ENCODE measurements at regions of chr11 and their contacts with region 1.

Region 1: DNA sequence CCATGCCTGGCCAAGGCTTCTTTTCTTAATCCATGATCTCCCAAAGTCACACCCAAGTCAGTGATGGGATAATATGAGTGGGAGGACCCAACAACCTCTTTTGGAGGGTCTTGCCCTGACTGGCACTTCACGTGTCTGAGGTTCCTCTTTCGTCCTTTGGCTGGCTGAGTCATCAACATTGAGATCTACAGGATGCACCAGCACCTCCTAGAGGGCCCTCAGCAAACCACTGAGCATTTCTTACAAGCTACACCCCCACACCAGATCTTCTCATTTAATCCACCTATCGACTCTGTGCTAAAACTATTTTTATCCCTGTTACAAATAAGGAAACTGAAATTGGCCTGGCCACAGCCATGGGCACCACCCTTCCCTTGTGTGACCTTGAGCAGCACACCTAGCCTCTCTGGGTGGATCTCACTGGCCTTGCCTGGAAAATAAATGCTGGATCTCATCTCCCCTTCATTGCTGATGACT is 63.4 kb downstream of the FLI1 start:
- DNase-seq: peak; percentile 87
- ATAC-seq: peak; percentile 90
- H3K4me3 Mint-ChIP-seq: peak overlapping the region; percentile 27
- H3K27ac Mint-ChIP-seq: peak overlapping the region; percentile 92
- H3K4me1 Mint-ChIP-seq: peaks cover 63% of the 10 kb centered on the region
- H3K27me3 Mint-ChIP-seq: no peaks in the 10 kb centered on the region

Region 2: DNA sequence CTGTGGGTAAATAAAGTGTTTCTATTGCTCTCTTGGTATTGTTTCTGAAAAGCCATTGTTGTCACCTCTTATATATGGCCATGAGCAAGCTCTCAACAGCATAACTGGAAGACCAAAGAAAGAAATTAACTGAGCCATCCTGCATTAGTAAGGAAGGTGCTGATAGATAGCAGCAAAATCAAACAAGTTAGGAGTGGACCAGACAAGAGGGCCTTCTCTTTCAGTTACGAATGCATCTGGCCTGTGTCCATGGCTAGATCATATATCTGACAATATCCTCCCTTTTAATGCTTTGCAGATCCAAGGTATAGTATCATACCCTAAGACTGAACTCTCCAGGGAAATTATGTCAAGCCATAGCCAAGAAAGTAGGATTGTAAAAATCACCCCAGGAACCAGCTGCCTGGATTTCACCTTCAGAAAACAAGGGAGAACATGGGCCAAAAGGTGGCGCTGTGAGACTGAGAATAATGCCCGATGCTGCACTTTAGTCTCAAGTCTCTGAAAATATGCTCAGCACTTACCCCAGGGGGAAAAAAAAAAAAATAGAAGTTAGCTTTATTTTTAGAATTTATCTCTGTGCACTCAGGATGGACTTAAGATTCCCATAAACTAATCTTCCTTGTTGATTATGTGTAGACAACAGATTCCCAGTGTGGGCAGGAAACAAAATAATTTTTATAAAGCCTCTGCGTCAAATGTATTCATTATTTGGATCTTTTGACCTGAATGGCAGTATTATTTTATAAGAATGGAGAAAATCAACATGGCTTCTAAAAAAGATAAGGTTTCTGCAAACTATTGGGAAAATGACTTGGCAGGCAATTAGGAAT is 585.0 kb before region 1 on chr11:
- CTCF ChIA-PET with region 1: interaction called, 10 read pairs
- DNase-seq: peak; percentile 91
- ATAC-seq: peak; percentile 93
- H3K4me3 Mint-ChIP-seq: no peak overlapping the region
- H3K27ac Mint-ChIP-seq: no peak overlapping the region
- H3K4me1 Mint-ChIP-seq: peaks cover 9% of the 10 kb centered on the region
- H3K27me3 Mint-ChIP-seq: no peaks in the 10 kb centered on the region

Region 3: DNA sequence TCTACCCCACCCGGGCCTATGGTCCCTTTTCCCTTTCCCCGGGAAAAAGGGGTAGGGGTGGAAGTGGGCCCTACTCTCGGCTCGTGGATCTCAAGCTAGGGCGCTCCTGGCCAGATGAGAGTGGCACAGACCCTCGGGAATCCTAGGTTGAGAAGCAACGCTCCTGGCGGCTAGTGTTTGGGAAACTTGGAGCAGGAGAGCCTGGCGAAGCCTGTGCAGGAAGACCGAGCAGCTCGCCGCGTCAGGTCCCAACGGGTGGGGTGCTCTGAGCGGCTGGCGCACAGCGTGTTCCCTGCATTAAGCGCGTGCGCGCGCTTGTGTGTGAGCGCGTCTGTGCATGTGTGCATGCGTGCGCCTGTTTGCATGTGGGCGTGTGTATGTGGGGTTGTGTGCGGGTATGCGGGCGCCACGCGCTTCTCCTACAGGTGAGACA is 70.5 kb before region 1 on chr11:
- CTCF ChIA-PET with region 1: interaction called, 14 read pairs
- DNase-seq: peak; percentile 72
- ATAC-seq: peak; percentile 86
- H3K4me3 Mint-ChIP-seq: peak overlapping the region; percentile 69
- H3K27ac Mint-ChIP-seq: no peak overlapping the region
- H3K4me1 Mint-ChIP-seq: peaks cover 28% of the 10 kb centered on the region
- H3K27me3 Mint-ChIP-seq: peaks cover 69% of the 10 kb centered on the region

Region 4: DNA sequence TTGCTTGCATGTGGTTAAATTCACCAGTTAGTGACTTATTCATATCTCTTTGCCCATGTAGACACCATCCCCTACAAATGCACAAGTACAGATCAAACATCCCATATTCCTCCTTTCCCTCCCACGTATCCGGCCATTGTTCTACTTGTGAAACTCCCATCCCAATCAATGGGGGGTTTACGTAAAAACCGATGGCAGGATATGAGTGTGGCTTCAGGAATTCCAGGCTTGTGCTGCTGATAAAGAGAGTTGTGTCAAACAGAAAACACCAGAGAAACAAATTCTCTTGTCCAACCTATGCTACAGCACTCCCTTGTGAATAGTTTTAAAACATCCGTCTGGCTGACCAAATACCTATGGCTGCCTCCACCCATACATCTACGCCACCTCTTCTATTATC is 47.9 kb before region 1 on chr11:
- CTCF ChIA-PET with region 1: interaction called, 11 read pairs
- DNase-seq: no peak
- ATAC-seq: no peak
- H3K4me3 Mint-ChIP-seq: no peak overlapping the region
- H3K27ac Mint-ChIP-seq: no peak overlapping the region
- H3K4me1 Mint-ChIP-seq: peaks cover 86% of the 10 kb centered on the region
- H3K27me3 Mint-ChIP-seq: no peaks in the 10 kb centered on the region

Region 5: GRCh38 chr11:128714881-128715280 is 42.4 kb before region 1 on chr11:
- CTCF ChIA-PET with region 1: interaction called, 11 read pairs
- DNase-seq: peak; percentile 40
- ATAC-seq: no peak
- H3K4me3 Mint-ChIP-seq: no peak overlapping the region
- H3K27ac Mint-ChIP-seq: peak overlapping the region; percentile 35
- H3K4me1 Mint-ChIP-seq: peaks cover 92% of the 10 kb centered on the region
- H3K27me3 Mint-ChIP-seq: no peaks in the 10 kb centered on the region

Region 6: DNA sequence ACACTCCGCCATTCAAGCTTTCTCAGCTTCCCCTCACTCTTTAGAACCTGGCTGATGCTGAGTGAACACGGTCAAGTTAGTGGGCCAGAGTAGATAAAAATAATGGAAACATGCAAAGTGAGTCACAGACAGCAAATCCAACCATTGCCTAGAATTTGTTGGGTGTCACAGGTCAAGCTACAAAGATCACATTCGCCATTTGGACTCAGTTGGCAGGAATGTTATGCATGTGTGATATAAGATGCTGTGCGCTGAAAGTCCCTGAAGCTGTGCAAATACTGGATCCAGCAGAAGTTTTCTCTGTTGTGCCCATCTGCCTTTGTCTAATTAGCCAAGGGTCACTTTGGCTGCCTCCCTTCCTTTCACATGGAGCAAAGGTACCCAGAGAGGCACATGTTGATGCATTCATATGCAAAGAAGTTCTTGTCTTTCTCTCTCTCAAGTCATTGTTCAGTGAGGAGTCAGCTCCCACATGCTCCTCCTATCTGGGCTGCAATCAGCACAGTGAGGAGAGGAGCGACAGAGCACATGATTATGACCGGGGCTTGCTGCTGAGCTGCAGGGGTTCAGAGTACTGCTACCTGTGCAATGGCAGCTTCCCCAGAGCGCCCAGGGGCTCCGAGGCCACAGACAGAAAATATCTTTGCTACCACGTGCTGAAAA is 23.7 kb before region 1 on chr11:
- CTCF ChIA-PET with region 1: interaction called, 45 read pairs
- DNase-seq: peak; percentile 75
- ATAC-seq: peak; percentile 49
- H3K4me3 Mint-ChIP-seq: peak overlapping the region; percentile 59
- H3K27ac Mint-ChIP-seq: peak overlapping the region; percentile 92
- H3K4me1 Mint-ChIP-seq: peaks cover 96% of the 10 kb centered on the region
- H3K27me3 Mint-ChIP-seq: no peaks in the 10 kb centered on the region